Endothelial cell of umbilical vein (primary cell): ENCODE measurements at regions of chr3 and their contacts with region 1.

Region 1: GRCh38 chr3:195030791-195031321 is 240.1 kb downstream of the XXYLT1 start:
- DNase-seq: peak; percentile 95
- H3K4me3 ChIP-seq: no peak overlapping the region
- H3K27ac ChIP-seq: peak overlapping the region; percentile 99
- H3K4me1 ChIP-seq: peaks cover 53% of the 10 kb centered on the region
- H3K27me3 ChIP-seq: no peaks in the 10 kb centered on the region
- CTCF ChIP-seq: no peak
- POLR2A ChIP-seq: peak; percentile 65

Region 2: DNA sequence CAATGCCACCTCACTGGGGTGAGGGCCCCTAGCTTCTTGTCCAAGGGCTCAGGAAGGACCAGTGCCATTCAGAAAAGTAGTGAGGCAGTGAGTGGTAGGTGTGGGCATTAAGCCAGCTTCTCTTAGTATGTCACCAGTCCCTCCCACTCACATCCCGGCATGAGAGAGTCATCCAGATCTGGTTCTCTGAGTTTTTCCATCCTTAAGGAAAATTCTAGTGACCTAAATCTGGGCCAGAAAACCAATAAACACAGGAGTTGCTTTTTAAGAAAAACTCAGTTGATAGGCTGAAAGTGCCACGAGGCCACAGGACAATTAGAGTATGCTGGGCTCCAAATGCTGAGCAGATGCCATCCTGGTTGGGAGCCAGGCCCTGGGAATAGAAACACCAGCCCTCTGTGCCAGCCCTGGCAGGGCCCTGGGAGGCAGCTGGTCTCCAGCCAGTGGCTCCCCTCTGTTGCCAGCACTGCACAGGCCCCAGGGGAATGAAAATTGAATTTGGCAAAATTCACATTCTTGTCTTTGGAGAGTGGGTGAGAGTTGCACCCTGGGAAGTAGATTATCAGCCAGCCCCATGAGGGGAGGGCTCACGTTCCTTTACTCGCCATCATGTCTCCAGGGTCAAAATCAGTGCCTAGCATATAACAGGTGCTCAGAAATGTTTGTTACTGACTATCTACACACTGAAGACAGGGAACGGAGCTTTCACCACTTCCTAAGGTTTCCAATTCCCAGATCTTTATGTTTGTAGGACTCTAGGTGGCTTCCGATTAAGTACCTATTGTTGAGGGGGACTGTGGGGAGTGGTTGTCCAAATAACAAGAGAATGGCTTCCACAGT is 292.4 kb before region 1 on chr3:
- CTCF ChIA-PET with region 1: no interaction called
- POLR2A ChIA-PET with region 1: no interaction called
- dilution Hi-C with region 1: no loop called
- intact Hi-C with region 1: loop called (anchors 1 kb)
- DNase-seq: peak; percentile 76
- H3K4me3 ChIP-seq: no peak overlapping the region
- H3K27ac ChIP-seq: peak overlapping the region; percentile 76
- H3K4me1 ChIP-seq: peaks cover 44% of the 10 kb centered on the region
- H3K27me3 ChIP-seq: no peaks in the 10 kb centered on the region
- CTCF ChIP-seq: no peak
- POLR2A ChIP-seq: no peak

Region 3: DNA sequence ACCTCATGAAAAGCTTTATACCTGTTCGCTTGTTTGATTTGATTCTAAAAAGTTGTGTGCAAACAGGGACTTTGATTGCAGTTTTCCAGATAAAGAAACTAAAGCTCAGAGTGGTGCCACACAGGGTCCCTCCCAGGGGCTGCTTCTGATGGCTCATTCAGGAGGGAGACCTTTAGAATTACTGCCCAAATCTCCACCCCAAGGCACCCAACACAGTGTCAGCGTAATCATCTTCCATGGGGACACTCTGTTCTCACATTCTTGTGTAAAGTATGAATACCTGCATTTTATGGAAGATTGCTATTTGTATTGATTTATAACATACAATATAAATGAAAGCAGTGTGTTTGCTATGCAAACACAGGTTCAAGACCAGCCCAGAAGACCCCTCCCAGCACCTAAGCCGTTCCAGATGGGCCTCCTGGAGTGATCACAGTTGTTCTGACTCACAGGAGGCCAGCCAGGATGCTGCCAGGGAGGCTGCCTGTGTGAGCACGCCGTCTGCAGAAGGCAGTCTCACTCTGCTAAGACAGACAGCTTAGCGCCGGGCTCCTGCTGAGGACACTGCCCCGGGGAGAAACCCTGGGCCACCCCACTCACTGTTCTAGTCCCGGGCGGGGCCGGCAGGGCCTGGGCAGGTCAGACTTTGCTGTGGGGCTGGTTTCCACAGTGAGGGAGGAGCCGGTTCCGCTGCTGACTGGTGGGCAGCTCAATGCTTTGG is 159.6 kb before region 1 on chr3:
- CTCF ChIA-PET with region 1: no interaction called
- POLR2A ChIA-PET with region 1: interaction called, 3 read pairs
- dilution Hi-C with region 1: no loop called
- intact Hi-C with region 1: loop called (anchors 1 kb)
- DNase-seq: peak; percentile 71
- H3K4me3 ChIP-seq: no peak overlapping the region
- H3K27ac ChIP-seq: peak overlapping the region; percentile 73
- H3K4me1 ChIP-seq: peaks cover 50% of the 10 kb centered on the region
- H3K27me3 ChIP-seq: no peaks in the 10 kb centered on the region
- CTCF ChIP-seq: no peak
- POLR2A ChIP-seq: no peak

Region 4: GRCh38 chr3:195001961-195002861 is 28.6 kb before region 1 on chr3:
- CTCF ChIA-PET with region 1: interaction called, 11 read pairs
- POLR2A ChIA-PET with region 1: no interaction called
- dilution Hi-C with region 1: no loop called
- intact Hi-C with region 1: loop called (anchors 1 kb)
- DNase-seq: peak; percentile 80
- H3K4me3 ChIP-seq: no peak overlapping the region
- H3K27ac ChIP-seq: no peak overlapping the region
- H3K4me1 ChIP-seq: peaks cover 5% of the 10 kb centered on the region
- H3K27me3 ChIP-seq: no peaks in the 10 kb centered on the region
- CTCF ChIP-seq: peak; percentile 67 to 83
- POLR2A ChIP-seq: no peak

Region 5: DNA sequence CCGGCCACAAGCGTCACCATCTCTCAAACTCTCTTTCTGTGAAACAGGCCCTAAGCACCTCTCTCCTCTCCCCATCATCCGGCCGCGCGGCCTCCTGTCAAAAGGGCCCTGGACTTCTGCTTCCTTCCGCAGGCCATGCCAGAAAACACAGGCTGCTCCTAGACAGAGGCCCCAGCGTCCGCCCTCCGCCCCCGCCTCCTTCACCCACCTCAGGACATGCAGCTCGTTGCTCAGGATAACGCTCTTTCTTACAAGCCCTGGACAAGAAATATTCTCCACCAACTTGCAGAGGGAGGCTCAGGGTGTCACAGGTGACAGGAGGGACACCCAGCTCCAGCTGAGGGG is 28.1 kb after region 1 on chr3:
- CTCF ChIA-PET with region 1: interaction called, 17 read pairs
- POLR2A ChIA-PET with region 1: interaction called, 3 read pairs
- dilution Hi-C with region 1: no loop called
- intact Hi-C with region 1: loop called (anchors 1 kb)
- DNase-seq: peak; percentile 88
- H3K4me3 ChIP-seq: no peak overlapping the region
- H3K27ac ChIP-seq: peak overlapping the region; percentile 54
- H3K4me1 ChIP-seq: peaks cover 15% of the 10 kb centered on the region
- H3K27me3 ChIP-seq: no peaks in the 10 kb centered on the region
- CTCF ChIP-seq: no peak
- POLR2A ChIP-seq: peak; percentile 32

Region 6: GRCh38 chr3:195154793-195155535 is 124.1 kb after region 1 on chr3:
- CTCF ChIA-PET with region 1: interaction called, 3 read pairs
- POLR2A ChIA-PET with region 1: interaction called, 4 read pairs
- dilution Hi-C with region 1: no loop called
- intact Hi-C with region 1: loop called (anchors 1 kb)
- DNase-seq: peak; percentile 100
- H3K4me3 ChIP-seq: no peak overlapping the region
- H3K27ac ChIP-seq: peak overlapping the region; percentile 95
- H3K4me1 ChIP-seq: peaks cover 86% of the 10 kb centered on the region
- H3K27me3 ChIP-seq: no peaks in the 10 kb centered on the region
- CTCF ChIP-seq: no peak
- POLR2A ChIP-seq: peak; percentile 80